ENCODE measurements at regions of chr2 and their contacts with region 1.

Region 1: GRCh38 chr2:100610381-100610831 is 47.6 kb downstream of the PDCL3 start:
- DNase-seq: peak; percentile 89
- H3K4me3 Mint-ChIP-seq: no peak overlapping the region
- H3K27ac Mint-ChIP-seq: no peak overlapping the region
- H3K4me1 Mint-ChIP-seq: peaks cover 4% of the 10 kb centered on the region
- H3K27me3 Mint-ChIP-seq: no peaks in the 10 kb centered on the region

Region 2: DNA sequence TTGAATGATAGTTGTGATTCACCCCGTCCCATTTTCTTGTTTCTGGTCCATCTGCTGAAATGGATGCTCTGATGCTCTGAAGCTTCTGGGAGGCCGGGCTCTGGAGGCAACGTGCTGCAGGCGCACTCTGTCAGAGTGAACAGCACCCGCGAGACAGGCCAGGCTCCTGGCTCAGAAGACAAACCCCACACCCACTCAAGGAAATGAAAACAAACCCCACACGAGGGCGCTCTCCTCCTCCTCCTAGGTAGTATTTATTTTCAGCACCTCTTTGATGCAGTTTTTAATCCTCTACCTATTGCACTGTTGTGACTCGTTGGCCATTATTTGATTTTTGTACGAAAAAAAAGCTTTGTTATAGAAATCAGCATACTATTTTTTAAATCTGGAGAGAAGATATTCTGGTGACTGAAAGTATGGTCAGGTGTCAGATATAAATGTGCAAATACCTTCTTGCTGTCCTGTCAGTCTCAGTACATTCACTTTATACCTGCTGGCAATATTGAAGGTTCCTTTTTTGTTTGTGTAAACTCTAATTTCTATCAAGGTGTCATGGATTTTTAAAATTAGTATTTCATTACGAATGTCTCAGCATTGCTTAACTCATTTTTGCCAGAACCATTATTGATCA is 182.7 kb before region 1 on chr2:
- CTCF ChIA-PET with region 1: no interaction called
- intact Hi-C with region 1: loop called (anchors 5 kb)
- DNase-seq: peak; percentile 89
- H3K4me3 Mint-ChIP-seq: no peak overlapping the region
- H3K27ac Mint-ChIP-seq: no peak overlapping the region
- H3K4me1 Mint-ChIP-seq: peaks cover 4% of the 10 kb centered on the region
- H3K27me3 Mint-ChIP-seq: no peaks in the 10 kb centered on the region

Region 3: GRCh38 chr2:100730346-100730745 is 119.9 kb after region 1 on chr2:
- CTCF ChIA-PET with region 1: interaction called, 18 read pairs
- intact Hi-C with region 1: loop called (anchors 1 kb)
- DNase-seq: peak; percentile 78
- H3K4me3 Mint-ChIP-seq: no peak overlapping the region
- H3K27ac Mint-ChIP-seq: no peak overlapping the region
- H3K4me1 Mint-ChIP-seq: peaks cover 5% of the 10 kb centered on the region
- H3K27me3 Mint-ChIP-seq: no peaks in the 10 kb centered on the region

Region 4: DNA sequence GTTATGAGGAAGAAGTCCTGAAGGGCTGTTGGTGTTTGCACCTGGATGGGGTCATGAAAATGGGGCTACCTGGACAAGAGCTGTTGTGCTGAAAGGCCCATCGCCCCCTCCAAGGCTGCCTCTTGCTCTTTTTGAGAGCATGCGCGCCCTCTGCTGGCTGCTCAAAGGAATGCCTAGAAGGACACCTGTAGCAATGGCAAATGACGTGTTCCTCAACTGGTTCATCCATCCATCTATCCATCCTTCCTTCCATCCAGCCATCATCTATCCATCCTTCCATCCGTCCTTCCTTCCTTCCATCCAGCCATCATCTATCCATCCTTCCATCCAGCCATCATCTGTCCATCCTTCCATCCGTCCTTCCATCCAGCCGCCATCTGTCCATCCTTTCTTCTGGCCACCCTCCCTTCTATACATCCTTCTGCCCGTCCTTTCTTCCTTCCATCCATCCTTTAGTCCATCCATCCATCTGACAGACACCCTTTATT is 374.5 kb after region 1 on chr2:
- CTCF ChIA-PET with region 1: interaction called, 41 read pairs
- intact Hi-C with region 1: loop called (anchors 1 kb)
- DNase-seq: peak; percentile 85
- H3K4me3 Mint-ChIP-seq: no peak overlapping the region
- H3K27ac Mint-ChIP-seq: no peak overlapping the region
- H3K4me1 Mint-ChIP-seq: no peaks in the 10 kb centered on the region
- H3K27me3 Mint-ChIP-seq: no peaks in the 10 kb centered on the region

Region 5: GRCh38 chr2:101151141-101151858 is 540.9 kb after region 1 on chr2 and contains the start of gene TBC1D8:
- CTCF ChIA-PET with region 1: no interaction called
- intact Hi-C with region 1: loop called (anchors 2 kb)
- DNase-seq: peak; percentile 66
- H3K4me3 Mint-ChIP-seq: peak within 1 kb of the TSS; percentile 77
- H3K27ac Mint-ChIP-seq: no peak within 1 kb of the TSS
- H3K4me1 Mint-ChIP-seq: peaks cover 17% of the 10 kb centered on the region
- H3K27me3 Mint-ChIP-seq: peaks cover 19% of the 10 kb centered on the region
- total RNA-seq, gene TBC1D8: 4.0 to 4.5 TPM